ENCODE measurements at regions of chr21 and their contacts with region 1.

Region 1: GRCh38 chr21:38958940-38959691 is 153.4 kb downstream of the ETS2 start:
- DNase-seq: no peak
- H3K4me3 Mint-ChIP-seq: peak overlapping the region; percentile 61
- H3K27ac Mint-ChIP-seq: peak overlapping the region; percentile 96
- H3K4me1 Mint-ChIP-seq: peaks cover 64% of the 10 kb centered on the region
- H3K27me3 Mint-ChIP-seq: no peaks in the 10 kb centered on the region

Region 2: DNA sequence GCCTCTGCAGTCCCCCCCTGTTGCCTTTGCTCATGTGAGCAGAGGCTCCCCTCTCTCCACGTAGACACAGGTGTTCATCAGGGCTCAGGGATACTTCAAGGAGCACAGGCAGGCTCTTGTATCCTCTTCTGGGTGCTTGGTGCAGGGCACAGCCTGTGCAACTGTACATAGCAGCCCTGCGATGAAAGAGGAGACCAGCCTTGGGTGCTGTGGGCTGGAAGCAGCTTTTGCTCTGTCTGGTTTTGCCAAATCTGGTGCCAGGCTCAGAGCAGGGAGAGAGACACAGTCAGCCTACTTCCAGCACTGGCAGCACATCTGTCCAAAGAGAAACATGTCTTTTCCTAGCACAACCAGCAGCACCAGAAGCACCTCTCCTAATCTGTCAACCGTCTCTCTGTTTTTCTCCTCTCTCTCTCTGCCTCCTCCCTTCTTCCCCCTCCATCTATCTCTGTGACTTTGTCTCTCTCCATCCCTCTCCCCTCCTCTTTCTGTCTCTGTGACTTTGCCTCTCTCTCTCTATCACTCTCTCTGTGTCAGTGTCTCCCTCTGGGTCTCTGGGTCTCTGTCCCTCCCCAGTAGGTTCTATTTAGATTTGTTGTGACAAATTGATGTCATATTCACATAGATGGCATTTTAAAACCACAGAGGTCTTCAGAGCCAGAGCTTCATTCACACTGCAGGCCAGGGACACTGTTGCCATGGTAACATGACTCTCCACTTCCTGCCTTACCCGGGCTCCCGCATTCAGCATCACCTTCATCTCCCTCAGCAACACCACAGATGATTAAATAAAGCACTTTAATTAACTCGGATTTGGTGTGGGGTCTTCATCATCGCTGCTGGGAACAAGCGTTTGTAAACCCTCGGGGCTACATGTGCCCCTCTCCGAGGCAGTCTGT is 21.0 kb before region 1 on chr21:
- intact Hi-C with region 1: loop called (anchors 2 kb)
- DNase-seq: peak; percentile 70
- H3K4me3 Mint-ChIP-seq: peak overlapping the region; percentile 65
- H3K27ac Mint-ChIP-seq: peak overlapping the region; percentile 96
- H3K4me1 Mint-ChIP-seq: peaks cover 34% of the 10 kb centered on the region
- H3K27me3 Mint-ChIP-seq: no peaks in the 10 kb centered on the region